Naive thymus-derived CD4-positive, alpha-beta T cell (primary cell): ENCODE measurements at regions of chr4 and their contacts with region 1.

Region 1: DNA sequence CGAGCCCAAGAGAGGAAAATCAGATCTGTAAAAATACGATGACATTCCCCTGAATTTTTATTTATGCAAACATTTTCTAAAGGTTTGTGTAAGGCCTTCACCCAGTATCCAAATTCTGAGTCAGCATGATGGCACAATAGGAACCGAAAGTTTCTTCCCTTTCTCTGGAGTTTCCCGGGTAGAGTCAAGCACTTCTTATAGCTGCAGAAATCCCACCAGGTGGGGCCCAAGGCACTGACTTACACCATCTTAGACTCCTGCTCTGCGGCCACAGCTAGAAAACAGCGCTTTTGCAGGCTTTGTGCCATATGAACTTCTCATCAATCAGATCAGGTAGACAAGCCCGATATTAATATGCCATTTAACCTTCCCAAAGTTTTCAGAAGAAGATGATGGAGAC is 13.4 kb downstream of the LEF1 start:
- DNase-seq: peak in 2 of 9 donors; percentile 38 to 65
- ATAC-seq: peak; percentile 65
- H3K4me3 ChIP-seq: peak overlapping the region; percentile 14
- H3K4me3 Mint-ChIP-seq: peak overlapping the region; percentile 83 to 100 (median 97)
- H3K27ac ChIP-seq: peak overlapping the region; percentile 87
- H3K27ac Mint-ChIP-seq: peak overlapping the region; percentile 66 to 97 (median 92)
- H3K4me1 ChIP-seq: peaks cover 35 to 72% of the 10 kb centered on the region in 2 donors
- H3K4me1 Mint-ChIP-seq: peaks cover 31 to 99% (median 80%) of the 10 kb centered on the region in 7 donors
- H3K27me3 ChIP-seq: no peaks in the 10 kb centered on the region
- H3K27me3 Mint-ChIP-seq: no peaks in the 10 kb centered on the region

Region 2: GRCh38 chr4:108094923-108095482 is 60.4 kb before region 1 on chr4:
- CTCF ChIA-PET with region 1: interaction called, 3 read pairs
- POLR2A ChIA-PET with region 1: interaction called, 12 read pairs
- intact Hi-C with region 1: no loop called
- DNase-seq: no peak
- ATAC-seq: no peak
- H3K4me3 ChIP-seq: no peak overlapping the region
- H3K4me3 Mint-ChIP-seq: peak overlapping the region; percentile 54 to 85 (median 64)
- H3K27ac ChIP-seq: peak overlapping the region; percentile 57
- H3K27ac Mint-ChIP-seq: peak overlapping the region; percentile 35 to 92 (median 90)
- H3K4me1 ChIP-seq: peaks cover 7 to 82% of the 10 kb centered on the region in 2 donors
- H3K4me1 Mint-ChIP-seq: peaks cover 51 to 97% (median 90%) of the 10 kb centered on the region in 7 donors
- H3K27me3 ChIP-seq: no peaks in the 10 kb centered on the region
- H3K27me3 Mint-ChIP-seq: no peaks in the 10 kb centered on the region

Region 3: GRCh38 chr4:108141213-108141950 is 14.0 kb before region 1 on chr4:
- CTCF ChIA-PET with region 1: interaction called, 5 read pairs
- POLR2A ChIA-PET with region 1: interaction called, 29 read pairs
- intact Hi-C with region 1: loop called (anchors 1 kb)
- DNase-seq: peak in 1 of 9 donors; percentile 53
- ATAC-seq: no peak
- H3K4me3 ChIP-seq: peak overlapping the region; percentile 38
- H3K4me3 Mint-ChIP-seq: peak overlapping the region; percentile 79 to 91 (median 84)
- H3K27ac ChIP-seq: peak overlapping the region; percentile 81
- H3K27ac Mint-ChIP-seq: peak overlapping the region; percentile 85 to 98 (median 95)
- H3K4me1 ChIP-seq: peaks cover 26 to 97% of the 10 kb centered on the region in 2 donors
- H3K4me1 Mint-ChIP-seq: peaks cover 61 to 99% (median 95%) of the 10 kb centered on the region in 7 donors
- H3K27me3 ChIP-seq: no peaks in the 10 kb centered on the region
- H3K27me3 Mint-ChIP-seq: no peaks in the 10 kb centered on the region

Region 4: DNA sequence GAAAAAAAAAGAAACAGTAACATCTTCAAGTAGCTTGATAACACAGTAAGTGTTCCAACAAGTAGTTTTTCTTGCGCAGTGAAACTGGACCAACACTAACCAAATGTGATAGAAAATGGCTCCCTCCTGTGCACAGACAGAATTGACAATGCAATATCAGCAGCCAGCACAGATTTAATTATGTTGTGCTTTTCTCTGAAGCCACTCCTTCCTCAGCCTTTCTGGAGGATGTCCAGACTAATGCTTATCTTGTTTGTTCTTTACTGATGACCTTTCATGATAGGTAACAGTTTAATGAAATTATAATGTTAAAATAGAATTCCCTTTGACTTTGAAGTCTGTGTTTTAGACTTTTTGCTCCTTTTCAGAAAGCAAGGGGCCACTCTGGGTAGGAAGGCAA is 317.8 kb after region 1 on chr4:
- CTCF ChIA-PET with region 1: no interaction called
- POLR2A ChIA-PET with region 1: no interaction called
- intact Hi-C with region 1: loop called in 1 of 2 experiments (anchors 1 kb)
- DNase-seq: peak in 4 of 9 donors; percentile 17 to 43 (median 22)
- ATAC-seq: peak; percentile 40
- H3K4me3 ChIP-seq: no peak overlapping the region
- H3K4me3 Mint-ChIP-seq: no peak overlapping the region
- H3K27ac ChIP-seq: no peak overlapping the region
- H3K27ac Mint-ChIP-seq: peak overlapping the region in 2 of 9 donors; percentile 25 to 31
- H3K4me1 ChIP-seq: peaks cover 0 to 7% of the 10 kb centered on the region in 2 donors
- H3K4me1 Mint-ChIP-seq: peaks cover 11 to 65% (median 58%) of the 10 kb centered on the region in 7 donors
- H3K27me3 ChIP-seq: no peaks in the 10 kb centered on the region
- H3K27me3 Mint-ChIP-seq: no peaks in the 10 kb centered on the region

Region 5: GRCh38 chr4:108512615-108513505 is 357.5 kb after region 1 on chr4:
- CTCF ChIA-PET with region 1: interaction called, 7 read pairs
- POLR2A ChIA-PET with region 1: no interaction called
- intact Hi-C with region 1: loop called (anchors 1 to 5 kb)
- DNase-seq: peak in 7 of 9 donors; percentile 42 to 68 (median 58)
- ATAC-seq: peak; percentile 82
- H3K4me3 ChIP-seq: peak overlapping the region; percentile 6
- H3K4me3 Mint-ChIP-seq: peak overlapping the region; percentile 72 to 87 (median 80)
- H3K27ac ChIP-seq: no peak overlapping the region
- H3K27ac Mint-ChIP-seq: peak overlapping the region in 7 of 9 donors; percentile 33 to 79 (median 71)
- H3K4me1 ChIP-seq: peaks cover 0 to 10% of the 10 kb centered on the region in 2 donors
- H3K4me1 Mint-ChIP-seq: peaks cover 9 to 37% (median 23%) of the 10 kb centered on the region in 7 donors
- H3K27me3 ChIP-seq: no peaks in the 10 kb centered on the region
- H3K27me3 Mint-ChIP-seq: peaks cover 0 to 11% (median 0%) of the 10 kb centered on the region in 5 donors